A673 (cell line): ENCODE measurements at regions of chr12 and their contacts with region 1.

Region 1: GRCh38 chr12:101939856-101940265 is 62.5 kb downstream of the DRAM1 start:
- DNase-seq: peak; percentile 87
- H3K4me3 ChIP-seq: no peak overlapping the region
- H3K27ac ChIP-seq: no peak overlapping the region
- H3K4me1 ChIP-seq: peaks cover 29% of the 10 kb centered on the region
- H3K27me3 ChIP-seq: no peaks in the 10 kb centered on the region
- CTCF ChIP-seq: peak; percentile 90

Region 2: DNA sequence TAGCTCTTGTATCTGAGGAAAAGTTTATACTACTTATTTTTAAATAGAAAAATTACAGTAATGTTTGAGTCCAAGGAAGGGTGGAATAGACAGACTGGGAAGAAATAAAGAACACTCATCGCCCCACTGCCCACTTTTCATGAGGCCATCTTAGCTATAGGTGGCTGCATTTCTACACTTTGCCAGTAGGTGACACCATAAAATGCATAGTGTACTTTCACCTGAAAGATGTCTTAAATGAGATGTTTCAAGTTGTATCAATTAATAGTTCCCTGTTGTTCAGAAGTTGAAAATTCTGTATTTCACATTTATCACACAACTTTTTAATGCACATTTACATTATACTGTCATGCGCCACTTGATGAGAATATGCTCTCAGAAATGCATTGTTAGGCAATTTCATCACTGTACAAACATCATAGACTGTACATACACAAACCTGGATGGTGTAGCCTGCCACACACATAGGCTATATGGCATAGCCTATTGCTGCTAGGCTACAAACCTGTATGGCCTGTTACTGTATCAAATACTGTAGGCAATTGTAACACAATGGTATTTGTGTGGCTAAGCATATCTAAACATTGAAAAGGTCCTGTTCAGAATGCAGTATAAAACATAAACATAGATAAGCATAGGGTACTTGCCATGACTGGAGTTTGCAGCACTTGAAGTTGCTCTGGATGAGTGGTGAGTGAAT is 230.2 kb after region 1 on chr12:
- CTCF ChIA-PET with region 1: no interaction called
- POLR2A ChIA-PET with region 1: no interaction called
- intact Hi-C with region 1: loop called (anchors 5 kb)
- DNase-seq: peak; percentile 34
- H3K4me3 ChIP-seq: no peak overlapping the region
- H3K27ac ChIP-seq: no peak overlapping the region
- H3K4me1 ChIP-seq: no peaks in the 10 kb centered on the region
- H3K27me3 ChIP-seq: peaks cover 30% of the 10 kb centered on the region
- CTCF ChIP-seq: peak; percentile 79

Region 3: GRCh38 chr12:102702447-102703114 is 762.7 kb after region 1 on chr12:
- CTCF ChIA-PET with region 1: no interaction called
- POLR2A ChIA-PET with region 1: interaction called, 3 read pairs
- intact Hi-C with region 1: loop called (anchors 5 kb)
- DNase-seq: peak; percentile 69
- H3K4me3 ChIP-seq: no peak overlapping the region
- H3K27ac ChIP-seq: no peak overlapping the region
- H3K4me1 ChIP-seq: no peaks in the 10 kb centered on the region
- H3K27me3 ChIP-seq: peaks cover 5% of the 10 kb centered on the region
- CTCF ChIP-seq: peak; percentile 78

Region 4: DNA sequence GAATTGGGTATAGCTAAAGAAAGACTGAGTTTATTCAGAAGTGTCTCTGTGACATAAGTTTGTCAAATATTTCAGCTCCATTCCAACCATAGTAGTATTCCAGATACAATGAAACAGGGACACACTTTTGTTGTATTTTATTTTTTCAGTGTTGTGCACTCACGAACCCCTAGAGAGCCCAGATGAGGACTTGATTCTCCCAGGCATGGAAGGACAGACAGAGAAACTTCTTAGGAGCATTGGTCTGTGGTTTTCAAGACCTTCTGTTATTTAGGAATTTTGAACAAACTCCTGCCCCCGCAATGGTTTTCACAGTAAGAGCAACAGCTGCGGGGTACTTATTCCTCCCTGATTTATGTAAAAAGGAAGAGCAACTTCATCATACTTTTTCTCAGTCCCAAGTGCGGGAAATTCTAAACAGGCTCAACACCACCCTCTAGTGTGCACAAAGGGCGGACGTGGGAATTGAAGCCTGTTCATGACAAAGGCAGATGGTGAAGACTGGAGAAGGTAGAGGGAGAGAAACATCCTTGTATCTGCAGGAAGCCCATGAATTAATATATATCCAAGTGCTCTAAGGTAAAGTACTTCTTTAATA is 829.6 kb after region 1 on chr12:
- CTCF ChIA-PET with region 1: interaction called, 11 read pairs
- POLR2A ChIA-PET with region 1: no interaction called
- intact Hi-C with region 1: loop called (anchors 2 kb)
- DNase-seq: peak; percentile 87
- H3K4me3 ChIP-seq: no peak overlapping the region
- H3K27ac ChIP-seq: no peak overlapping the region
- H3K4me1 ChIP-seq: peaks cover 27% of the 10 kb centered on the region
- H3K27me3 ChIP-seq: no peaks in the 10 kb centered on the region
- CTCF ChIP-seq: peak; percentile 81

Region 5: DNA sequence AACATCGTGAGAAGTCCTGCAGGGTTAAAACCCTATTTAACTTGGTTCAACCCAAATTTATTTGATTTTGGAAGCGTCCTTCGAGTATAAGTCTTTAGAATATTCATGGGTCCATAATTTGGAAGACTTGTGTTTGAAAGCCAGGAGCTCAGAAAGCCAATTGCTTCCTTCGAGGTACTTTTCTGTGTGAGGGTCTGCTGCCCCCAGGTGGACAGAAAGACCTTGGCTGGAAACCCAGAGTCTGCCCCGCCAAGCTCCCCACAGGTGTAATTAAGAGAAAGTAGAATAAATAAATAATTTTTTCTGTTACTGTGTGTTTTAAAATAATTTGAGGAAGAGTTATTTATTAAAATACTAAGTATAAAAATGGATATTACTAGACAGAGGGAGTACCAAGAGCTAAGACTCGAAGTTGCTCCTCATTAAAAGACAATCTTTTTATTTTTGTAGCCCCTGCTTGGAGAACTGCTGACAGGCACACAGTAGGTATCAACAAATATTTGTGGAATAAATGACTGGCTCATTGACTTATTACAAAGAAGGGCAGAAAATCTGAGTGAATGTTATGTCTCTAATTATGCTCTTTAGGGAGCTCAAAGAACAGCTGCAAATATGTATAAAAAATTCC is 871.4 kb after region 1 on chr12:
- CTCF ChIA-PET with region 1: interaction called, 6 read pairs
- POLR2A ChIA-PET with region 1: no interaction called
- intact Hi-C with region 1: loop called (anchors 5 kb)
- DNase-seq: peak; percentile 55
- H3K4me3 ChIP-seq: no peak overlapping the region
- H3K27ac ChIP-seq: no peak overlapping the region
- H3K4me1 ChIP-seq: no peaks in the 10 kb centered on the region
- H3K27me3 ChIP-seq: peaks cover 16% of the 10 kb centered on the region
- CTCF ChIP-seq: peak; percentile 65

Region 6: GRCh38 chr12:102879144-102879763 is 939.4 kb after region 1 on chr12:
- CTCF ChIA-PET with region 1: no interaction called
- POLR2A ChIA-PET with region 1: no interaction called
- intact Hi-C with region 1: loop called (anchors 2 kb)
- DNase-seq: peak; percentile 77
- H3K4me3 ChIP-seq: no peak overlapping the region
- H3K27ac ChIP-seq: no peak overlapping the region
- H3K4me1 ChIP-seq: no peaks in the 10 kb centered on the region
- H3K27me3 ChIP-seq: peaks cover 8% of the 10 kb centered on the region
- CTCF ChIP-seq: peak; percentile 61